HepG2 (cell line): ENCODE measurements at regions of chr2 and their contacts with region 1.

Region 1: GRCh38 chr2:179991344-179991743 is 15.8 kb downstream of the CWC22 start:
- DNase-seq: no peak
- ATAC-seq: peak; percentile 86
- H3K4me3 ChIP-seq: no peak overlapping the region
- H3K27ac ChIP-seq: no peak overlapping the region
- H3K4me1 ChIP-seq: no peaks in the 10 kb centered on the region
- H3K27me3 ChIP-seq: no peaks in the 10 kb centered on the region
- CTCF ChIP-seq: no peak
- EP300 ChIP-seq: no peak
- POLR2A ChIP-seq: no peak
- RAD21 ChIP-seq: no peak

Region 2: GRCh38 chr2:180077295-180077906 is 86.1 kb after region 1 on chr2:
- CTCF ChIA-PET with region 1: no interaction called
- POLR2A ChIA-PET with region 1: no interaction called
- in situ Hi-C with region 1: no loop called
- intact Hi-C with region 1: loop called (anchors 5 kb)
- DNase-seq: peak; percentile 5
- ATAC-seq: peak; percentile 52; the same call in 2 of the 3 replicates
- H3K4me3 ChIP-seq: no peak overlapping the region
- H3K27ac ChIP-seq: no peak overlapping the region
- H3K4me1 ChIP-seq: no peaks in the 10 kb centered on the region
- H3K27me3 ChIP-seq: no peaks in the 10 kb centered on the region
- CTCF ChIP-seq: 0 out of 2 replicates have a peak, but pooled peaks have one; percentile 38
- EP300 ChIP-seq: no peak
- POLR2A ChIP-seq: no peak
- RAD21 ChIP-seq: no peak